CD14-positive monocyte (primary cell): ENCODE measurements at regions of chr2 and their contacts with region 1.

Region 1: GRCh38 chr2:60699617-60700016 is 56.5 kb upstream of the PAPOLG start:
- DNase-seq: peak in 1 of 3 donors; percentile 4
- H3K4me3 ChIP-seq: no peak overlapping the region
- H3K4me3 Mint-ChIP-seq: no peak overlapping the region
- H3K27ac ChIP-seq: no peak overlapping the region
- H3K27ac Mint-ChIP-seq: no peak overlapping the region
- H3K4me1 ChIP-seq: peaks cover 6 to 7% of the 10 kb centered on the region in 2 donors
- H3K4me1 Mint-ChIP-seq: peaks cover 6% of the 10 kb centered on the region
- H3K27me3 ChIP-seq: no peaks in the 10 kb centered on the region
- H3K27me3 Mint-ChIP-seq: peaks cover 0 to 3% (median 1%) of the 10 kb centered on the region in 3 donors
- CTCF ChIP-seq: no peak

Region 2: DNA sequence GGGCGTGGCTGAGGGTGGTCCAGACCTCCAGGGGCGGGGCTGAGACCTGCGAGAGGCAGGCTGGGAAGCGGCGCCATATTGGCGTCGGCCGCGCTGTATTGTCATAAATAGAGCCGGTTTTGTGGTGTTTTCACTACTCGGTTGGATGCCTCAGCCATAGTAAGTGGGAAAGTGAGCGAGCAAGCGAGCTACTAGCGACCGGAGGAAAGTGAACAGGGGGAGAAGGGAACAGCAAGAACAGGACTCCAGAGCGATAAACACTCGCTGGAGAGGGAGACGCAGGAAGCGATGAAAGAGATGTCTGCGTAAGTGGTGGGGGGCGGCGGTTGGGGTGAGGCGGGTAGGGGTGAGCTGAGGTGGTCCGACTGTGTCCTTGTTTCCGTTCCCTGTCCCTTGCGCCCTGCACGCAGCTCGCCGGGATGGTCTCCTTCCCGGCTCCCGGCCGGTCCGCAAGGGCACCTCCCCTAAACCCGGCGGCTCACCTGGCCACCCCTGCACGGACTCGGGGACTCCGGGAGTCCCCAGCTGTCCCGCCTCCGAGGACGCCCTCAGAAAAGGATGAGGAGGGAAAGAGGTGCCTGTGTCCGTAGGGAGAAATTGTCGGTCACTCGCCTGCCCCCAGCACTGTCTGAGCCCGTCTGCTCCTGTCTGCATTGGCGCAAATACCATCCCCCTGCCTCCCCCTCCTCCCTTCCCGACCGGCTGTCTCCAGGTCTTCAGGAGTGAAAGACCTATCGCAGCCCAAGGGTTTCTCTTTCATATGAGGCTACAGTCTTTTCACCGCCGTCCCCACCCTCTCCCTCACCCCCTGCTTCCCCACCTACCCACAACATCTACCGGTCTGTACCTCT is 56.8 kb after region 1 on chr2 and contains the start of gene PAPOLG:
- intact Hi-C with region 1: loop called in 1 of 2 experiments (anchors 5 kb)
- DNase-seq: peak; percentile 85 to 91 (median 87)
- H3K4me3 ChIP-seq: peak within 1 kb of the TSS; percentile 87 to 98 (median 96)
- H3K4me3 Mint-ChIP-seq: peak within 1 kb of the TSS; percentile 98 to 100
- H3K27ac ChIP-seq: peak within 1 kb of the TSS; percentile 68 to 85
- H3K27ac Mint-ChIP-seq: peak within 1 kb of the TSS; percentile 94 to 98 (median 97)
- H3K4me1 ChIP-seq: peaks cover 11 to 19% of the 10 kb centered on the region in 2 donors
- H3K4me1 Mint-ChIP-seq: peaks cover 17% of the 10 kb centered on the region
- H3K27me3 ChIP-seq: no peaks in the 10 kb centered on the region
- H3K27me3 Mint-ChIP-seq: no peaks in the 10 kb centered on the region
- CTCF ChIP-seq: no peak
- polyA plus RNA-seq, gene PAPOLG: 4.7 to 8.9 (median 8.0) TPM